GM12878 (cell line): ENCODE measurements at regions of chr16 and their contacts with region 1.

Region 1: GRCh38 chr16:67246934-67247697 is at the start of gene FHOD1:
- DNase-seq: peak; percentile 80
- ATAC-seq: peak; percentile 66
- H3K4me3 ChIP-seq: peak within 1 kb of the TSS; percentile 97
- H3K27ac ChIP-seq: peak within 1 kb of the TSS; percentile 98
- H3K4me1 ChIP-seq: peaks cover 33% of the 10 kb centered on the region
- H3K27me3 ChIP-seq: no peaks in the 10 kb centered on the region; a peak in 1 of 4 replicates
- CTCF ChIP-seq: no peak
- EP300 ChIP-seq: no peak
- POLR2A ChIP-seq: peak; percentile 86
- RAD21 ChIP-seq: no peak
- polyA plus RNA-seq, gene FHOD1: 9.0 to 17.7 TPM

Region 2: GRCh38 chr16:67129422-67129821 is 117.7 kb before region 1 on chr16:
- CTCF ChIA-PET with region 1: no interaction called
- POLR2A ChIA-PET with region 1: no interaction called
- RAD21 ChIA-PET with region 1: no interaction called
- SMC1A ChIA-PET with region 1: no interaction called
- in situ Hi-C with region 1: no loop called
- intact Hi-C with region 1: no loop called
- DNase-seq: no peak
- ATAC-seq: no peak
- H3K4me3 ChIP-seq: no peak overlapping the region
- H3K27ac ChIP-seq: no peak overlapping the region
- H3K4me1 ChIP-seq: no peaks in the 10 kb centered on the region
- H3K27me3 ChIP-seq: no peaks in the 10 kb centered on the region
- CTCF ChIP-seq: no peak
- EP300 ChIP-seq: no peak
- POLR2A ChIP-seq: no peak
- RAD21 ChIP-seq: no peak

Region 3: DNA sequence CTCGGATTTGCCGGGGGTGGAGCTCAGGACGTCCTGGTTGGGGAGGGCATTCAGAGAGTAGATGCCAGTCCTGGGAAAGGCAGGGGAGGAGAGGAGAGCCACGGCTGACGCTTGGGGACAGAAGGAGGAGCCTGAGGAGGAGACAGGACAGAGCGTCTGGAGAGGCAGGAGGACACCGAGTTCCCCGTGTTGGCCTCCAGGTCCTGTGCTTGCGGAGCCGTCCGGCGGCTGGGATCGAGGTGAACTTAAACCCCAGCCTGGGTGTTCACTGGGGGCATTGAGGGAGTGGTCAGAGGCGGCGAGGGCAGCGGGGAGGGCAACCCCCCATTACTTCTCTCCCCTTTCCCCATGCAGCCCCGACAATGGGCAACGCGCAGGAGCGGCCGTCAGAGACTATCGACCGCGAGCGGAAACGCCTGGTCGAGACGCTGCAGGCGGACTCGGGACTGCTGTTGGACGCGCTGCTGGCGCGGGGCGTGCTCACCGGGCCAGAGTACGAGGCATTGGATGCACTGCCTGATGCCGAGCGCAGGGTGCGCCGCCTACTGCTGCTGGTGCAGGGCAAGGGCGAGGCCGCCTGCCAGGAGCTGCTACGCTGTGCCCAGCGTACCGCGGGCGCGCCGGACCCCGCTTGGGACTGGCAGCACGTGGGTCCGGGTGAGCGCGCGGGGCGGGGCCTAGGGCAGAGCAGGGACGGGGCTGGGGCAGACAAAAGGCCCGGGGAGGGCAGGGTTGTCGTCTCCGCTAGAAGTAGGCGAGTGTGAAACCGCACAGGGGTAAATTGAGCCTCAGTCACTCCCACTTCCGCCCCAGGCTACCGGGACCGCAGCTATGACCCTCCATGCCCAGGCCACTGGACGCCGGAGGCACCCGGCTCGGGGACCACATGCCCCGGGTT is 73.1 kb before region 1 on chr16:
- CTCF ChIA-PET with region 1: interaction called, 5 read pairs
- POLR2A ChIA-PET with region 1: interaction called, 7 read pairs
- RAD21 ChIA-PET with region 1: interaction called, 11 read pairs
- SMC1A ChIA-PET with region 1: interaction called, 3 read pairs
- in situ Hi-C with region 1: no loop called
- intact Hi-C with region 1: no loop called
- DNase-seq: no peak
- ATAC-seq: peak; percentile 70
- H3K4me3 ChIP-seq: peak overlapping the region; percentile 55
- H3K27ac ChIP-seq: no peak overlapping the region
- H3K4me1 ChIP-seq: peaks cover 44% of the 10 kb centered on the region
- H3K27me3 ChIP-seq: no peaks in the 10 kb centered on the region
- CTCF ChIP-seq: peak in 1 of 3 experiments; percentile 30; a peak in 2 of 6 replicates
- EP300 ChIP-seq: no peak; a peak in 1 of 4 replicates
- POLR2A ChIP-seq: peak; percentile 50
- RAD21 ChIP-seq: no peak

Region 4: DNA sequence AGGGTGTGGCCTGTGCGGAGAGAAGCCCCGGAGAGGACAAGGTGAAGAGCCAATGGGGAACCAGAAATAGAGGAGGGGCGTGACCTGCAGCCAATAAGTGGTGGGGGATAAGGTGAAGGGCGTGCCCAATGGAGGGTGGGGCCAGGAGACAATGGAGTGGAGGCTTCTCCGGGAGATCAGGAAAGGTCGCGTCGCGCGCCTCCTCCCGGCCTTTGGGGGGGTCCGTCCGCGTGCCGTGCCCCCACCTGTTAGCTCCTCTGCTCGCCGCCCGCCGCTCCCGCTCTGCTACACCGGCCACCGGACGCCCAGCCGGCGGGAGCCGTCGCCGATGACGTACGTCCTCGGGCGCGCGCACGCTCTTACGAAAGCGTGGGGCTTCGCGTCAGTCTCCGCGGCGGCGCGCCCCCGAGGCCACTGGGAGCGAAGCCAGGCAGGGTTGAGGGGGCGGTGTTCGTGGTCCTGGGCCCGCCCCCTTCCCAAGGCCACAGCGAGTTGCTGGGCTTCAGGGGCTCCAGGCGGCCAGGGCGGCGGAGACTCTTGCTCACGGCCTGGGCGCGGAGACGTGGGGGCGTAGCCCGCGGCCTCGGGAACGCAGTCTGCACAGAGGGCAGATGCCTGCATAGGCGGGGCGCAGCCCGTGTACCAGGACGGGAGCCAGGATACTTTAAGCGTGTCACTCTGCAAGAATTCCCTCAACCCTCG is 63.3 kb before region 1 on chr16 and contains the start of gene MATCAP1:
- CTCF ChIA-PET with region 1: interaction called, 8 read pairs
- POLR2A ChIA-PET with region 1: interaction called, 3 read pairs
- RAD21 ChIA-PET with region 1: interaction called, 3 read pairs
- SMC1A ChIA-PET with region 1: no interaction called
- in situ Hi-C with region 1: no loop called
- intact Hi-C with region 1: loop called (anchors 2 kb)
- DNase-seq: peak; percentile 91
- ATAC-seq: peak; percentile 96
- H3K4me3 ChIP-seq: peak within 1 kb of the TSS; percentile 76
- H3K27ac ChIP-seq: peak within 1 kb of the TSS; percentile 84
- H3K4me1 ChIP-seq: peaks cover 4% of the 10 kb centered on the region
- H3K27me3 ChIP-seq: peaks cover 0 to 3% of the 10 kb centered on the region in 2 experiments; a peak in 2 of 4 replicates
- CTCF ChIP-seq: no peak
- EP300 ChIP-seq: no peak
- POLR2A ChIP-seq: peak; percentile 76
- RAD21 ChIP-seq: no peak
- polyA plus RNA-seq, gene MATCAP1: 2.8 to 6.6 TPM

Region 5: GRCh38 chr16:67191995-67192681 is 55.0 kb before region 1 on chr16 and contains the start of gene E2F4:
- CTCF ChIA-PET with region 1: interaction called, 11 read pairs
- POLR2A ChIA-PET with region 1: interaction called, 4 read pairs
- RAD21 ChIA-PET with region 1: interaction called, 7 read pairs
- SMC1A ChIA-PET with region 1: interaction called, 9 read pairs
- in situ Hi-C with region 1: no loop called
- intact Hi-C with region 1: loop called (anchors 2 kb)
- DNase-seq: peak; percentile 66
- ATAC-seq: peak; percentile 98
- H3K4me3 ChIP-seq: peak within 1 kb of the TSS; percentile 99
- H3K27ac ChIP-seq: peak within 1 kb of the TSS; percentile 79
- H3K4me1 ChIP-seq: peaks cover 8% of the 10 kb centered on the region
- H3K27me3 ChIP-seq: no peaks in the 10 kb centered on the region
- CTCF ChIP-seq: no peak
- EP300 ChIP-seq: no peak
- POLR2A ChIP-seq: peak; percentile 84
- RAD21 ChIP-seq: no peak
- polyA plus RNA-seq, gene E2F4: 11.7 to 16.5 TPM

Region 6: DNA sequence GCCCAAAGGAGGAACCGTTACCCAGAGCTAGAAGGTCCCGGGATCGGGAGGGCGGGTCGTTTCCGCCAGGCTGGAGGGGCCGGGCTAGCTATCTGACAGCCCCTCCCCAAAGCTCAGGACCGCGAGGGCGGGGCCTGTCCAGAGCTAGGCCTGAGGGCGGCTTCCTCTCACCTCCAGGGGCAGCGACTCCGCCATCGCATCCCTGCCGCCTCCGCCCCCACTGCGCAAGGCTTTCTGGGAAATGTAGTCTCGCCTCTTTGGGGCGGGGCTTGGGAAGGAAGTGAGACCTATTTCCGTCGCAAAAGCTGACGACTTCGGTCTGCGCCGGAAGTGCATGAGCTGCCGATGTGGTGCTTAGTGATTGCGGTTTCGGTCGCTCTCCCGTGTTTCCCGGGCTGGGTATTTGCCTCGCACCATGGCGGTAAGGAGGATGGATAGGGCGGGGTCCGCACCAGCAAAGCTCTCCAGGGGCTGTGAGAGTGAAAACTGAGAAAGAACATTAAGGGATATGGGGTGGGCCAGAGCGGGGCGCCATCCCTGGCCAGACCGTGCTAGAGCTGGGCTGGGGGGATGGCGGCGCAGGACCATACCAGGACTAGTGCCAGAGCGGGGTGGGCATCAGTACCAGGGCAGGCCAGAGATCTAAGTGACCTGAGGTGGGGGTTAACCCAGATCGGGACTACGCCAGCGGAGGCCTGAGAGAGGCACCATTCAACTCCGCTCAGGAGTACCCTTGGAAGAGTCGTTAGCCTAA is 20.1 kb before region 1 on chr16 and contains the start of gene TMEM208:
- CTCF ChIA-PET with region 1: interaction called, 25 read pairs
- POLR2A ChIA-PET with region 1: interaction called, 100 read pairs
- RAD21 ChIA-PET with region 1: interaction called, 35 read pairs
- SMC1A ChIA-PET with region 1: interaction called, 21 read pairs
- in situ Hi-C with region 1: no loop called
- intact Hi-C with region 1: loop called (anchors 1 kb)
- DNase-seq: peak; percentile 97
- ATAC-seq: peak; percentile 99
- H3K4me3 ChIP-seq: peak within 1 kb of the TSS; percentile 87
- H3K27ac ChIP-seq: peak within 1 kb of the TSS; percentile 74
- H3K4me1 ChIP-seq: peaks cover 12% of the 10 kb centered on the region
- H3K27me3 ChIP-seq: no peaks in the 10 kb centered on the region
- CTCF ChIP-seq: peak; percentile 10 to 18 (median 14); a peak in 3 of 6 replicates
- EP300 ChIP-seq: no peak
- POLR2A ChIP-seq: peak; percentile 88
- RAD21 ChIP-seq: no peak
- polyA plus RNA-seq, gene TMEM208: 169 to 244 TPM

Region 7: DNA sequence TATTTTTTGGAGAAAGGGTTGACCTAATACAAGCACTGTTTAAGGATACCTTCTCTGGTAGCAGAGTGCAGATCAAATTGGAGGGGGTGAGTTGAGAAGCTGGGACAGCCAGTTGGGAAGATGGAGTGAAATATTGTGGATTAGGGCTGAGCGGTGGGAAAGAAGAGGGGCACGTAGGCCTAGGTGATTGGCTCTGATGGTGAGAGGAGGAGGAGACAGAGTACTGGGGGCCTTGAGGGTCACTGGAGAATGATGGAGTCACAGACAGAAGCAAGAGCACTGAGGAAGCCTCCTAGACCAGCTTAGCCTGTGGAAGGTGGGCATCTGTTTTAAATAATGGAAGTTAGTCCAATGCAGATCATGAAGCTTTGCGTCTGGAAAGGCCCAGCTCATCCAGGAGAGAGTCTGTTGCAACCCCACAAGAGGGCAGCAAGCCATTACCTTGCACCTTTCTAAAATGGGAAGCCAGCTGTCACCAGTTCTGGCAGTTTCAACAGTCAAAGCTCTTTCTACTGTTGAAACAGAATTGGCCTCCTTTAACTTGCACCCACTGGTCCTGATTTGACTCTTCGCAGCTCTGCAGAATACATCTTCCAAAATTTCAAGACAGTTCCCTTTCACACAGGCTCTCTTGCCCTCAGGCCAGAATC is 13.4 kb after region 1 on chr16:
- CTCF ChIA-PET with region 1: interaction called, 29 read pairs
- POLR2A ChIA-PET with region 1: interaction called, 4 read pairs
- RAD21 ChIA-PET with region 1: interaction called, 10 read pairs
- SMC1A ChIA-PET with region 1: interaction called, 8 read pairs
- in situ Hi-C with region 1: no loop called
- intact Hi-C with region 1: no loop called
- DNase-seq: no peak
- ATAC-seq: peak; percentile 88
- H3K4me3 ChIP-seq: no peak overlapping the region
- H3K27ac ChIP-seq: no peak overlapping the region
- H3K4me1 ChIP-seq: no peaks in the 10 kb centered on the region
- H3K27me3 ChIP-seq: no peaks in the 10 kb centered on the region
- CTCF ChIP-seq: peak; percentile 77 to 81 (median 80)
- EP300 ChIP-seq: no peak
- POLR2A ChIP-seq: no peak
- RAD21 ChIP-seq: peak; percentile 94

Region 8: GRCh38 chr16:67326472-67327309 is 79.6 kb after region 1 on chr16 and contains the starts of genes KCTD19 and LRRC36:
- CTCF ChIA-PET with region 1: interaction called, 3 read pairs
- POLR2A ChIA-PET with region 1: interaction called, 10 read pairs
- RAD21 ChIA-PET with region 1: interaction called, 6 read pairs
- SMC1A ChIA-PET with region 1: interaction called, 3 read pairs
- in situ Hi-C with region 1: no loop called
- intact Hi-C with region 1: no loop called
- DNase-seq: no peak
- ATAC-seq: peak; percentile 72
- H3K4me3 ChIP-seq: peak within 1 kb of the TSS; percentile 74
- H3K27ac ChIP-seq: peak within 1 kb of the TSS; percentile 29; the same call in 1 of the 2 replicates
- H3K4me1 ChIP-seq: peaks cover 22% of the 10 kb centered on the region
- H3K27me3 ChIP-seq: no peaks in the 10 kb centered on the region; a peak in 1 of 4 replicates
- CTCF ChIP-seq: peak; percentile 31 to 51 (median 46)
- EP300 ChIP-seq: no peak
- POLR2A ChIP-seq: peak; percentile 40; the same call in 1 of the 2 replicates
- RAD21 ChIP-seq: no peak
- polyA plus RNA-seq, gene KCTD19: 1.6 to 2.5 TPM
- polyA plus RNA-seq, gene LRRC36: 0.69 to 0.79 TPM